Breast epithelium (tissue), 4 donors: ENCODE measurements at regions of chr10 and their contacts with region 1.

Region 1: GRCh38 chr10:51982972-51983371 is 283.6 kb upstream of the CSTF2T start:
- DNase-seq: no peak
- H3K4me3 ChIP-seq: no peak overlapping the region
- H3K27ac ChIP-seq: no peak overlapping the region
- H3K4me1 ChIP-seq: no peaks in the 10 kb centered on the region
- H3K27me3 ChIP-seq: no peaks in the 10 kb centered on the region
- CTCF ChIP-seq: no peak
- POLR2A ChIP-seq: no peak

Region 2: GRCh38 chr10:52198540-52198939 is 215.6 kb after region 1 on chr10:
- intact Hi-C with region 1: loop called (anchors 5 kb)
- DNase-seq: no peak
- H3K4me3 ChIP-seq: no peak overlapping the region
- H3K27ac ChIP-seq: no peak overlapping the region
- H3K4me1 ChIP-seq: no peaks in the 10 kb centered on the region
- H3K27me3 ChIP-seq: no peaks in the 10 kb centered on the region
- CTCF ChIP-seq: no peak
- POLR2A ChIP-seq: no peak

Region 3: GRCh38 chr10:52571018-52571417 is 588.0 kb after region 1 on chr10:
- intact Hi-C with region 1: no loop called
- DNase-seq: no peak
- H3K4me3 ChIP-seq: no peak overlapping the region
- H3K27ac ChIP-seq: no peak overlapping the region
- H3K4me1 ChIP-seq: no peaks in the 10 kb centered on the region
- H3K27me3 ChIP-seq: no peaks in the 10 kb centered on the region
- CTCF ChIP-seq: no peak
- POLR2A ChIP-seq: no peak